ENCODE measurements at regions of chr9 and their contacts with region 1.

Region 1: GRCh38 chr9:34139477-34140146 is 13.1 kb upstream of the DCAF12 start:
- DNase-seq: no peak
- H3K4me3 ChIP-seq: no peak overlapping the region
- H3K27ac ChIP-seq: no peak overlapping the region
- H3K4me1 ChIP-seq: no peaks in the 10 kb centered on the region
- H3K27me3 ChIP-seq: no peaks in the 10 kb centered on the region
- CTCF ChIP-seq: peak; percentile 9 to 24 (median 19); a peak in 3 of 4 replicates
- EP300 ChIP-seq: no peak
- POLR2A ChIP-seq: no peak
- RAD21 ChIP-seq: peak in 1 of 2 experiments; percentile 34; a peak in 2 of 4 replicates

Region 2: GRCh38 chr9:34093578-34093977 is 46.0 kb before region 1 on chr9:
- CTCF ChIA-PET with region 1: no interaction called
- POLR2A ChIA-PET with region 1: no interaction called
- DNase-seq: no peak
- H3K4me3 ChIP-seq: no peak overlapping the region
- H3K27ac ChIP-seq: no peak overlapping the region
- H3K4me1 ChIP-seq: no peaks in the 10 kb centered on the region
- H3K27me3 ChIP-seq: no peaks in the 10 kb centered on the region
- CTCF ChIP-seq: no peak
- EP300 ChIP-seq: no peak
- POLR2A ChIP-seq: no peak
- RAD21 ChIP-seq: no peak

Region 3: DNA sequence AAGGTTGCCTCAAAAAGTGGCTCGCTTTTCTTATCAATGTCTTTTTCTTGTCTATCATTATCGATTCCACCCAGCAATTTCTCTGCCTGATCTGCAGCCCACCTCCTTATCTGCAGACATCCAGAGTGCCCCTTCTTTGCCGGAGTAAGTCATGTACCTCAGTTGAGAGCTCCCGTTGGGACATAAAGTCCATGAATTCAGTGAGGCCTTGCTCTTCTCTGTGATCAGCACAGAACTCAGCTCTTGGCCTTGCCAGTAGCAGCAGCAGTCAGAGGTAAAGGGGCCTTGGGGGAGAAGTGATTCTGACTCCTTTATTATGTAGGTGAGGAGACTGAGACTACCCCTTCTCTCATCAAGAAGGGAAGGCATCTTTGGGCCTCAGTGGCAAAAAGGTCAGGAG is 11.8 kb after region 1 on chr9:
- CTCF ChIA-PET with region 1: interaction called, 11 read pairs
- POLR2A ChIA-PET with region 1: no interaction called
- DNase-seq: no peak
- H3K4me3 ChIP-seq: no peak overlapping the region
- H3K27ac ChIP-seq: no peak overlapping the region
- H3K4me1 ChIP-seq: no peaks in the 10 kb centered on the region
- H3K27me3 ChIP-seq: no peaks in the 10 kb centered on the region
- CTCF ChIP-seq: no peak
- EP300 ChIP-seq: no peak
- POLR2A ChIP-seq: no peak
- RAD21 ChIP-seq: no peak